HEK293 (cell line): ENCODE measurements at regions of chr6 and their contacts with region 1.

Region 1: DNA sequence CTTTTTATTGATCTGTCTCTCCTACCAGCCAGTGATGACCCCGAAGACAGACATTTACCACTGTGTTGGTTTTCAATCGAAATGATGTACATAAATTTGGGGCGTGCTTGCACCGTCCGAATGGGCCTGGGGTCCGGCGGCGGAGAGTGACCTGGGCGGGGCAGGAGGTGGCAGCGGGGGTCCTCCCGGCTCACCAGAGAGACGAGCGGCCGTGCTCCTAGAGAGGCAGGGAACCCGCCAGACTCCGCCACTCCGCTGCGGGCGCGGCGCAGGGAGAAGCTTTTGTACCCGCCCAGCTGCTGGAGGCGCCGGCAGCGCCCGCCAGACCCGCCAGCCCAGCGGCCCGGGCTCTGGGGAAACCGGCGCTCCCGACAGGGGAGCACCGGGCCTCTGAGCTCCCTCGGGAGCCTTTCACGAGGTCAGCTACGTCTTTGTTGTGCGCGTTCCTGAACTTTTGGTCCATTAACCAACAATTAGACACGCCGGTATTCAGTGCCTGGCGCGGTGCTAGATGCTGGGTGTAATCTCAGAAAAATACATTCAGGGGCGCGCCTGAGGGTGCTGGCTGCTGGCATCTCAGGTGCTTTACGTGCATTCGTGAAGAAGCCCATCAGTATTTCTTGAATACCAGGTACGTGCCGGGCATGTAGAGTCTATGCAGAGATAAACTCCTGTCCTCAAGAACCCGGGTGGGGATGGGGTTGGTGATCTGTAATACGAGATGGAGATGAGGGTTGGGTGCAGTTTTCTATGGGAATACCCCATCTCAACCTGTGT is at the start of gene PGBD1:
- H3K4me3 ChIP-seq: peak within 1 kb of the TSS; percentile 89
- H3K27ac ChIP-seq: peak within 1 kb of the TSS; percentile 65; the same call in 1 of the 2 replicates
- H3K4me1 ChIP-seq: no peaks in the 10 kb centered on the region
- CTCF ChIP-seq: 0 out of 2 replicates have a peak, but pooled peaks have one; percentile 25

Region 2: GRCh38 chr6:27911956-27912446 is 369.5 kb before region 1 on chr6 and contains the start of gene OR2B2:
- CTCF ChIA-PET with region 1: no interaction called
- POLR2A ChIA-PET with region 1: no interaction called
- H3K4me3 ChIP-seq: no peak within 1 kb of the TSS
- H3K27ac ChIP-seq: no peak within 1 kb of the TSS
- H3K4me1 ChIP-seq: no peaks in the 10 kb centered on the region
- CTCF ChIP-seq: no peak

Region 3: DNA sequence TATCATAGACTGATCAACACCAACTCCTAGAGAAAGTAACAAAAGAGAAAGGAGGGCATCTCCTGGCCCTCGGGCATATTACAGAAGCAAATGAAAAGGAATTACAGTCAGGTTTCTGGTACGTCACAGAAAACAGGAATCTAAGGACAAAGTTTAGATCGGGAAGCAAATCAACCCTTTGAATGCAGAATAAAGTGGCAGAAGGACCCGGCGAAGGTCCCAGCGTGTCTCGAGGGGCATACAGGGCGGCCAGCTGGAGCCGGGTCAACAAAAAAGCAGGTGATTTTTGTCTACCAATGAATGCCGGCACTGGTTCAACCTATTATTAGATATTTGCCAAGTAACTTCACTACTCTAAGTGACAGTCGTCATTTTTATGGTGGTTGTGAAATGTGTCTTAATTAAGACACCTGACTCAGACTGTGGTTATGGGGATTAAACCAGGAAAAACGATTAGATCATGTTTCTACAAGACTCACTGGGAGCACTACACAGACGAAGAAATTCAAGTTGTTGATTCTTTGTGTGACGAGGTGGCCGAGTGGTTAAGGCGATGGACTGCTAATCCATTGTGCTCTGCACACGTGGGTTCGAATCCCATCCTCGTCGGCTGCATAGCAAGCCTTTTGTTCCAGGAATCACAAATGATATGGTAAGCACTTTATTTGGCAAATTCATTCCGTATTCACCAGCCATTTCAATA is 68.8 kb before region 1 on chr6:
- CTCF ChIA-PET with region 1: no interaction called
- POLR2A ChIA-PET with region 1: no interaction called
- H3K4me3 ChIP-seq: peak overlapping the region; percentile 54
- H3K27ac ChIP-seq: peak overlapping the region; percentile 64
- H3K4me1 ChIP-seq: no peaks in the 10 kb centered on the region; the same call in 1 of the 2 replicates
- CTCF ChIP-seq: no peak; the same call in 1 of the 2 replicates

Region 4: GRCh38 chr6:28252009-28252975 is 29.2 kb before region 1 on chr6 and contains the start of gene ZKSCAN4:
- CTCF ChIA-PET with region 1: interaction called, 3 read pairs
- POLR2A ChIA-PET with region 1: interaction called, 13 read pairs
- H3K4me3 ChIP-seq: peak within 1 kb of the TSS; percentile 74
- H3K27ac ChIP-seq: peak within 1 kb of the TSS; percentile 20; the same call in 1 of the 2 replicates
- H3K4me1 ChIP-seq: peaks cover 5% of the 10 kb centered on the region; the same call in 1 of the 2 replicates
- CTCF ChIP-seq: no peak

Region 5: GRCh38 chr6:28315628-28316027 is 34.2 kb after region 1 on chr6:
- CTCF ChIA-PET with region 1: no interaction called
- POLR2A ChIA-PET with region 1: no interaction called
- H3K4me3 ChIP-seq: no peak overlapping the region
- H3K27ac ChIP-seq: no peak overlapping the region
- H3K4me1 ChIP-seq: peaks cover 6% of the 10 kb centered on the region
- CTCF ChIP-seq: no peak

Region 6: GRCh38 chr6:28349892-28350737 is 68.6 kb after region 1 on chr6 and contains the start of gene ZKSCAN3:
- CTCF ChIA-PET with region 1: interaction called, 6 read pairs
- POLR2A ChIA-PET with region 1: interaction called, 12 read pairs
- H3K4me3 ChIP-seq: peak within 1 kb of the TSS; percentile 52
- H3K27ac ChIP-seq: peak within 1 kb of the TSS; percentile 69
- H3K4me1 ChIP-seq: peaks cover 4% of the 10 kb centered on the region; the same call in 1 of the 2 replicates
- CTCF ChIP-seq: peak; percentile 58; the same call in 1 of the 2 replicates